ENCODE measurements at regions of chr17 and their contacts with region 1.

Region 1: DNA sequence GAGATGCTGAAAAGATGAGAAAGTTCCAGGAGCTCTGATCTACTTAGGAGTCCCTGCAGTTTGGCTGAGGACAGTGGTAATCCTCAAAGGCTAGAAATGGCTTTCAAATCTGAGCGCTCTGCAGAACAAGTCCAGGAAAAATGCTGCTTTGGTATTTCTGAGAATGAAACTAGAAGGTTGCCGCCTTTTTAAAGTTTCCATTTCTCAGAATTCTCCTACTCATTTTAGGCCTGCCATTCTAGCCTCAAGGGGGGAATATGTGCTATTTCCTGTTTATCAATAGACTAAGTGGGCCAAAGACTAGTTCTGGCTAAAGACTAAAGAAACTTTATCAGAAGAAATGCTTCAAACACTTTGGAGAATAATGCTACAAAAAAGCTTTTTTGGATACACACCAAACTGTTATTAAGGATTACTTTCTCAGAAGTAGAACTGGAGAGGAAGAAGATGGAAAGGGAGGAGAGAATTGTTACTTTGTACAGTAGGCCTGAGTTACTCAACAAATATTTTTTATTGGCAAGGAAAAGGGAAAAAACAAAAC is at the start of gene SLFN12L:
- DNase-seq: no peak
- ATAC-seq: peak; percentile 37 to 44
- H3K4me3 ChIP-seq: no peak within 1 kb of the TSS
- H3K27ac ChIP-seq: peak within 1 kb of the TSS; percentile 62
- H3K4me1 ChIP-seq: peaks cover 1% of the 10 kb centered on the region
- H3K27me3 ChIP-seq: no peaks in the 10 kb centered on the region
- total RNA-seq, gene SLFN12L: 0.23 to 1.0 (median 0.55) TPM

Region 2: DNA sequence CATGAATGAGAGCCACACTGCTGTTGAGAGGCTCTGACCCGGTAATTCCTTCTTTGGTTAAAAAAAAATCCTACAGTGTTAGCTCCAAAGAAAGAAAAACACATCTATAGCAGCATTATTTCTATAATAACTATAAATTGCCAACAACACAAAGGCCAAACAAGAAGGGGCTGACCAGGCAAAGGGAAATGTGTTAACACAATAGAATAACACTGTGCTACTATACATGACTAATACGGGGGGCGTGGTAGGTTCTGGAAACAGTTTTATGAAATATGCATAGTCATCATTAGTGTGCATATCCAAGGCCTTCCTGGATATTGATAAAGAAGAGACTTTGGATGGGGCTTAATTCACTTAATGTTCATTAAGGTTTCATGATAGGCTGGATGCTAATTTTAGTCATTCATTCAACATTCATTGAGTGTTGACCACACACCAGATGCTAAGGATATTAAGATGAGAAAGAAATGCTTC is 1124.7 kb before region 1 on chr17:
- intact Hi-C with region 1: loop called in 1 of 4 experiments (anchors 10 kb)
- DNase-seq: no peak
- ATAC-seq: no peak
- H3K4me3 ChIP-seq: no peak overlapping the region
- H3K27ac ChIP-seq: no peak overlapping the region
- H3K4me1 ChIP-seq: no peaks in the 10 kb centered on the region
- H3K27me3 ChIP-seq: no peaks in the 10 kb centered on the region

Region 3: DNA sequence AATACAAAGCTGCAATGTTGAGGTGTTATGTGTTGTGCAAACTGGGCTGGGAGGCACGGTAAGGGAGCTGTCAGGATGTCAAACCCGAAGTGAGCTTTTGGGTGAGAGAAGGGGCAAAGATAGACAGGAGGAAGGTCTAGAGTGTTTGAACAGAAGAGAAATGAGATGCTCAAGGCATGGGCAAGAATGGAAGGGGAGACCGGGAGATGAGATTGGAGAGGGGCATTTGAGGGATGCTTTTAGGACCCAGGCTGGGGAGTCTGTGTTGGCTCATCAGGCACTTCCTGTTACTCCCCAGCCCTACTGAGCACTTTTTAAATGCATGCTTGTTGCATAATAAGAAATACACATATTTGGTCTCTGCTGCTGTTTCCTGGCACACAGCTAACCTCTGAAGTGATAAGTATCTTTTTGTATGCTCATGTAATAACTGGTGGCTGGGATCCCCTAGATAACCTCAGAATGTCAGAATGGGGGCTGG is 376.4 kb before region 1 on chr17:
- intact Hi-C with region 1: loop called in 2 of 4 experiments (anchors 10 kb)
- DNase-seq: no peak
- ATAC-seq: no peak
- H3K4me3 ChIP-seq: no peak overlapping the region
- H3K27ac ChIP-seq: no peak overlapping the region
- H3K4me1 ChIP-seq: peaks cover 2% of the 10 kb centered on the region
- H3K27me3 ChIP-seq: no peaks in the 10 kb centered on the region

Measured in right cardiac atrium (tissue), 5 donors.